ENCODE measurements at regions of chr2 and their contacts with region 1.

Region 1: GRCh38 chr2:173134703-173135102 is 59.1 kb downstream of the MAP3K20 start:
- DNase-seq: no peak
- CTCF ChIP-seq: no peak

Region 2: GRCh38 chr2:173119069-173119807 is 15.5 kb before region 1 on chr2:
- CTCF ChIA-PET with region 1: interaction called, 38 read pairs
- POLR2A ChIA-PET with region 1: no interaction called
- DNase-seq: peak; percentile 21
- CTCF ChIP-seq: no peak

Region 3: DNA sequence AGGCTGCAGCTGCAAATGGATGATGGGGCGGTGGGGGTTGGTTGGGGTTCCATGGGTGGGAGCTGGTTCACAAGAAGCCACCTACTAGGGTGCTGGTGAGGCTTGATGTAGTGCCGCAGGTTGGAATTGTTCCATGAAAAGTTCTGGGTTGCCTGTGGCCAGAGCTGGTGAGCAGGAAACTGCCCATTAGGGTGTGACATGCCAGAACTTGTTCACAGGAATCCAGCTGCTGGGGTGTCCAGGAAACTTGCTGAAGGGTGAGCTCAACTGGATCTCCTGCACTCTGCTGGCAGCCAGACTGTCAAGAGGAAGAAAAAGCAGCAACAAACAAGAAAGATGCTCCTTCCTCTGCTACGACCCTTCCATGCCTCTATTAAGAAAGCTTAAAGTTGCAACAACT is 10.3 kb before region 1 on chr2:
- CTCF ChIA-PET with region 1: interaction called, 38 read pairs
- POLR2A ChIA-PET with region 1: no interaction called
- DNase-seq: no peak
- CTCF ChIP-seq: no peak

Measured in GM10248 (cell line).